ENCODE measurements at regions of chr2 and their contacts with region 1.

Region 1: GRCh38 chr2:233251306-233252116 is at the start of gene ATG16L1:
- DNase-seq: peak; percentile 98
- H3K4me3 ChIP-seq: peak within 1 kb of the TSS; percentile 96 to 99
- H3K27ac ChIP-seq: peak within 1 kb of the TSS; percentile 73 to 85
- H3K4me1 ChIP-seq: peaks cover 10% of the 10 kb centered on the region
- H3K27me3 ChIP-seq: no peaks in the 10 kb centered on the region
- CTCF ChIP-seq: peak; percentile 82 to 98 (median 95)
- POLR2A ChIP-seq: no peak
- total RNA-seq, gene ATG16L1: 47.2 to 53.1 TPM

Region 2: GRCh38 chr2:232600053-232600773 is 651.3 kb before region 1 on chr2:
- intact Hi-C with region 1: loop called (anchors 10 kb)
- DNase-seq: no peak
- H3K4me3 ChIP-seq: no peak overlapping the region
- H3K27ac ChIP-seq: no peak overlapping the region
- H3K4me1 ChIP-seq: no peaks in the 10 kb centered on the region
- H3K27me3 ChIP-seq: no peaks in the 10 kb centered on the region
- CTCF ChIP-seq: no peak
- POLR2A ChIP-seq: no peak

Region 3: DNA sequence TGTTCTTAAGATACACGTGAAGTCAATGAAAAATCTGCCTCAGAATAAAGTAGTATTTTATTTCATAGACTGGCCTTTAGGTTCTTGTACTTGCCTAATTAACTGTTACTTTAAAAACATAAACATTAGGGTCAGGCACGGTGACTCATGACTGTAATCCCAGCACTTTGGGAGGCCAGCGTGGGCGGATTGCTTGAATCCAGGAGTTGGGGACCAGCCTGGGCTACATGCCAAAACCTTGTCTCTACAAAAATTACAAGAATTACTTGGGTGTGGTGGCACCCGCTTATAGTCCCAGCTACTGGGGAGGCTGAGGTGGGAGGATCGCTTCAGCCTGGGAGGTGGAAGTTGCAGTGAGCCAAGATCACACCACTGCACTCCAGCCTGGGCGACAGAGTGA is 397.4 kb before region 1 on chr2:
- intact Hi-C with region 1: loop called (anchors 5 kb)
- DNase-seq: peak; percentile 56
- H3K4me3 ChIP-seq: no peak overlapping the region
- H3K27ac ChIP-seq: no peak overlapping the region
- H3K4me1 ChIP-seq: peaks cover 21% of the 10 kb centered on the region
- H3K27me3 ChIP-seq: no peaks in the 10 kb centered on the region
- CTCF ChIP-seq: no peak
- POLR2A ChIP-seq: no peak